SK-N-SH (cell line): ENCODE measurements at regions of chr9 and their contacts with region 1.

Region 1: DNA sequence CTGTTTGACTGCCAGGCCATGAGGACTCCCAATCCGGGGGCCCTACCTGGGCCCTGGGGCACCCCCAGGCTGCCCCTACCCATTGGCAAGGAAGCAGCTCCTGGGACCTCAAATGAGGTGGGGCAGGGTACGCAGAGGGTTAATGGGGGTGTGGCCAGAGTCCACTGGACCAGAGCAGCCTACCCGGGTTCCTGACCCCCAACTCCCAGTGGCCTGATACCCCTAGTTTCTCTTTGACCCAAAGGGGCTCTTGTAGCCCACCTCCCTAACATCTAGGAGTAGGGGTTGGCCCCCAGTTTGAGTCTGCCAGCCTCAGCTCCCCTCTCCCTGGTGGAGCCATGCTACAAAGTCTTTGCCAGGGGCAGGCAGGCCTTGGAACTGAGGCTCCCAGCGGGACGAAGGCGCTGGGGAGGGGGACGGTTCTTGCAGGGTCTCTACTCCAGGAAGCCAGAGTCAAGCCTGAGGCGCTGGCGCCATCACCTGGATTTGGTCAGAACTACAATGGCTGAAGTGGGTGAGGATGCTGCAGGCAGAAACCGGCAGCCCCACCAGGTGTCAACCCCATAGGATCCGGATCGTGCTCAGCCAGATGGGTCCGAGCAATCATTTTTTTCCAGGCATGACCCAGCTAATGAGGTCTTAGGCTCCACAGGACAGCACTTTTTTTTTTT is 8.4 kb upstream of the CERCAM start:
- DNase-seq: peak; percentile 87
- H3K4me3 ChIP-seq: peak overlapping the region in 1 of 2 experiments; percentile 50; a peak in 1 of 4 replicates
- H3K27ac ChIP-seq: no peak overlapping the region
- H3K4me1 ChIP-seq: peaks cover 0 to 2% of the 10 kb centered on the region in 2 experiments; a peak in 1 of 4 replicates
- H3K27me3 ChIP-seq: no peaks in the 10 kb centered on the region; the same call in 1 of the 2 replicates
- CTCF ChIP-seq: peak; percentile 69
- EP300 ChIP-seq: no peak
- RAD21 ChIP-seq: peak; percentile 88

Region 2: GRCh38 chr9:128361986-128362646 is 50.1 kb before region 1 on chr9:
- CTCF ChIA-PET with region 1: interaction called, 113 read pairs
- POLR2A ChIA-PET with region 1: no interaction called
- DNase-seq: peak; percentile 92
- H3K4me3 ChIP-seq: peak overlapping the region; percentile 43 to 58
- H3K27ac ChIP-seq: peak overlapping the region; percentile 29 to 72; a peak in 3 of 4 replicates
- H3K4me1 ChIP-seq: peaks cover 7 to 8% of the 10 kb centered on the region in 2 experiments; a peak in 2 of 4 replicates
- H3K27me3 ChIP-seq: no peaks in the 10 kb centered on the region
- CTCF ChIP-seq: peak; percentile 90
- EP300 ChIP-seq: no peak
- RAD21 ChIP-seq: peak; percentile 86

Region 3: DNA sequence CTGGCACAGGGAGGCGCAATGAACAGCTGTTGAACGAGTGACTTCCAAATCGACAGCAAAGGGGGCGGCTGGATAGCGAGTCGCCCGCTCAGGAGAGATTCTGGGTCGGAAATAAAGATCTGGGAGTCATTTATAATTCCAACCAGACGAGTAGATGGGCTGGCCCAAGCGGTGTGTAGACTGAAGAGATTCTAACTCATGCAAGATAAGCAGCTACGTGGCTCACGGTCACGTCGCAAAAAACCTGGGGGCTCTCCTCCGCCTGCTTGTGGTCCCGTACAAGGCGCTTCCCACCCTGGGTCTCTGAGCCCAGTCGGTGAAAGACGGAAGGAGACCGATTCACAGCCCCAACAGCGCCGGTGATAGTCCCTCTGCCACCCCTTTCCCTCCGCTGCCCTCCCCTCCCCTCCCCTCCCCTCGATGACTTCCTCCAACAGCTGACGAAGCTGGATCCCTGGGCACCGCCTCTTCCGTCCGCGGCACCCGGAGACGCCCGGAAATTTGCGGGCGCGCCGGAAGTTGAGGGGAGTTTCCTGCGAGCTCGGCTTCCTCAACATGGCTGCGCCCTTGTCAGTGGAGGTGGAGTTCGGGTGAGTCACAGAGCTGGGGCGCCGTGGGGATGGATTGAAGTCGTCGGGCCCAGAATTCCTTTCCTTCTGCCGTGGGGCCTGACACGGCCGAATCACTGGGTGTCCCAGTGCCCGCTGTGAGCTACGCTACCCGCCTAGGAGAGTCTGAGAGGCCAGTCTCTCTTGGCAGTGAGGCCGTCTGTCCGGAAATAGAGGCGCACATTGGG is 41.2 kb before region 1 on chr9 and contains the start of gene URM1:
- CTCF ChIA-PET with region 1: interaction called, 15 read pairs
- POLR2A ChIA-PET with region 1: interaction called, 3 read pairs
- DNase-seq: peak; percentile 97
- H3K4me3 ChIP-seq: peak within 1 kb of the TSS; percentile 78 to 87
- H3K27ac ChIP-seq: peak within 1 kb of the TSS; percentile 89 to 91
- H3K4me1 ChIP-seq: peaks cover 0 to 20% of the 10 kb centered on the region in 2 experiments; a peak in 2 of 4 replicates
- H3K27me3 ChIP-seq: no peaks in the 10 kb centered on the region
- CTCF ChIP-seq: peak; percentile 29; the same call in 1 of the 2 replicates
- EP300 ChIP-seq: no peak
- RAD21 ChIP-seq: 0 out of 2 replicates have a peak, but pooled peaks have one; percentile 14
- polyA plus RNA-seq, gene URM1: 58.9 and 61.5 TPM in 2 replicates

Region 4: GRCh38 chr9:128383007-128383753 is 29.1 kb before region 1 on chr9:
- CTCF ChIA-PET with region 1: interaction called, 22 read pairs
- POLR2A ChIA-PET with region 1: no interaction called
- DNase-seq: no peak
- H3K4me3 ChIP-seq: no peak overlapping the region
- H3K27ac ChIP-seq: peak overlapping the region in 1 of 2 experiments; percentile 29; a peak in 1 of 4 replicates
- H3K4me1 ChIP-seq: peaks cover 0 to 12% of the 10 kb centered on the region in 2 experiments; a peak in 1 of 4 replicates
- H3K27me3 ChIP-seq: no peaks in the 10 kb centered on the region
- CTCF ChIP-seq: no peak
- EP300 ChIP-seq: no peak
- RAD21 ChIP-seq: no peak

Region 5: DNA sequence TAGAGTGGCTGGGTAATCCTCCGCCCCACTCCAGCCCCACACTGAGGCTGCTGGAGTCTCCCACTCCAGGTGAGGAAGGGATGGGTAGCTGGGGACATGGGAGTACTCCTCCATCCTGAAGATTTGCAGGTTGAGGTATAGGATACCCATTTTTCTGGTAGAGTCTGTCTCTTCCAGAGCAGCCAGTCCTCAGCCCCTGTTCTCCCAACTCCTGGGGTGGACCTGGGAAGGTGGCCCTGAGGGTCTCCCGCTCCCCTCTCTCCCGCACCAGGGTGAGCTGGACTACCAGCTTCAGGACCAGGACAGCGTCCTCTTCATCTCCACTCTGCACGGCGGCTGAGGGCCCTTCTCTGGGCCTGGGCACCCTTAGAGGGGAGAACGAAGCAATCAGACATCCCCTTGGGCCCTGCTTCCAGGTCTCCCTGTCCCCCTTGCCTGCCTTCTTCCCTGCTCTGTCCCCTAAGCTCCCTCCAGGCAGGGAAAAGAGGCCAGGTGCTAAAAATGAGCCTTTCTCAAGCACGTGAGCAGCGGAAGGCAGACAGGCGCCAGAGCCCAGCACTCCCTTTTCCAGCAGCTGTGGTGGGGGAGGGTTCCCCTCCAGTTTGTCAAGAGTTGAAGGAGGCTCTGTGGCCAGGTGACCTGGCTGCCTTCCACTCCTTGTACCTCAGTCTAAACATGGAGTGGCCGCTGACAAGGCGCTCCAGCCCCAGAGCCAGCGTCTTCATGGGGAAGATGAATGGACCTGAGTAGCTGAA is 22.7 kb before region 1 on chr9:
- CTCF ChIA-PET with region 1: interaction called, 22 read pairs
- POLR2A ChIA-PET with region 1: no interaction called
- DNase-seq: no peak
- H3K4me3 ChIP-seq: no peak overlapping the region
- H3K27ac ChIP-seq: no peak overlapping the region
- H3K4me1 ChIP-seq: no peaks in the 10 kb centered on the region
- H3K27me3 ChIP-seq: no peaks in the 10 kb centered on the region
- CTCF ChIP-seq: no peak
- EP300 ChIP-seq: no peak
- RAD21 ChIP-seq: no peak